ENCODE measurements at regions of chr3 and their contacts with region 1.

Region 1: DNA sequence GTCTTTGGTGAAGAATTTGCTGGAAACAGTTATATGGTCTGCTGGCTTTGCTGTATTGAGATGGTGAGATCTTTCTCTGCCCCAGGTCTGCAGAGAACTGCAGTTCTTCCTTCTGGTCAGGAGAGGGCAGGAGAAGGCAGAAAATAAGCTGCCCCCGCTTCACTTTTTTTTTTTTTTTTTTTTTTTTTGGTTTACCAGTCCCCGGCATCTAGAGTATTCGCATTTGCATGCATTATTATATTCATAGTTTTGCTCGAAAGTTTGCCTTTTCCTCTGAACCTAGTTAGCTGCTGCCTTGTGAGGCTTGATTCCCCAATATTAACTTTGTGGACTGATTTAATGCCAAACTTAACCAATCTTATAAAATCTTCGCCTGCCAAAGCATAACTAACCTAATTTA is 10.6 kb upstream of the PARL start:
- DNase-seq: peak in 1 of 2 experiments; percentile 43
- H3K4me3 ChIP-seq: no peak overlapping the region
- H3K4me3 Mint-ChIP-seq: no peak overlapping the region
- H3K27ac Mint-ChIP-seq: no peak overlapping the region
- H3K4me1 ChIP-seq: peaks cover 7% of the 10 kb centered on the region; the same call in 1 of the 2 replicates
- H3K4me1 Mint-ChIP-seq: no peaks in the 10 kb centered on the region
- H3K27me3 ChIP-seq: no peaks in the 10 kb centered on the region
- H3K27me3 Mint-ChIP-seq: no peaks in the 10 kb centered on the region
- CTCF ChIP-seq: peak; percentile 82 to 83

Region 2: GRCh38 chr3:183966251-183966801 is 71.0 kb after region 1 on chr3:
- CTCF ChIA-PET with region 1: no interaction called
- POLR2A ChIA-PET with region 1: no interaction called
- intact Hi-C with region 1: loop called (anchors 1 kb)
- DNase-seq: peak; percentile 68
- H3K4me3 ChIP-seq: no peak overlapping the region
- H3K4me3 Mint-ChIP-seq: peak overlapping the region; percentile 42
- H3K27ac Mint-ChIP-seq: peak overlapping the region; percentile 76
- H3K4me1 ChIP-seq: peaks cover 46% of the 10 kb centered on the region
- H3K4me1 Mint-ChIP-seq: peaks cover 31% of the 10 kb centered on the region
- H3K27me3 ChIP-seq: no peaks in the 10 kb centered on the region
- H3K27me3 Mint-ChIP-seq: no peaks in the 10 kb centered on the region
- CTCF ChIP-seq: no peak

Region 3: GRCh38 chr3:183988216-183988790 is 93.0 kb after region 1 on chr3:
- CTCF ChIA-PET with region 1: interaction called, 11 read pairs
- POLR2A ChIA-PET with region 1: no interaction called
- intact Hi-C with region 1: no loop called
- DNase-seq: peak; percentile 77
- H3K4me3 ChIP-seq: no peak overlapping the region
- H3K4me3 Mint-ChIP-seq: peak overlapping the region; percentile 52
- H3K27ac Mint-ChIP-seq: peak overlapping the region; percentile 72
- H3K4me1 ChIP-seq: peaks cover 40% of the 10 kb centered on the region
- H3K4me1 Mint-ChIP-seq: peaks cover 48% of the 10 kb centered on the region
- H3K27me3 ChIP-seq: no peaks in the 10 kb centered on the region
- H3K27me3 Mint-ChIP-seq: no peaks in the 10 kb centered on the region
- CTCF ChIP-seq: peak in 1 of 2 experiments; percentile 38

Region 4: DNA sequence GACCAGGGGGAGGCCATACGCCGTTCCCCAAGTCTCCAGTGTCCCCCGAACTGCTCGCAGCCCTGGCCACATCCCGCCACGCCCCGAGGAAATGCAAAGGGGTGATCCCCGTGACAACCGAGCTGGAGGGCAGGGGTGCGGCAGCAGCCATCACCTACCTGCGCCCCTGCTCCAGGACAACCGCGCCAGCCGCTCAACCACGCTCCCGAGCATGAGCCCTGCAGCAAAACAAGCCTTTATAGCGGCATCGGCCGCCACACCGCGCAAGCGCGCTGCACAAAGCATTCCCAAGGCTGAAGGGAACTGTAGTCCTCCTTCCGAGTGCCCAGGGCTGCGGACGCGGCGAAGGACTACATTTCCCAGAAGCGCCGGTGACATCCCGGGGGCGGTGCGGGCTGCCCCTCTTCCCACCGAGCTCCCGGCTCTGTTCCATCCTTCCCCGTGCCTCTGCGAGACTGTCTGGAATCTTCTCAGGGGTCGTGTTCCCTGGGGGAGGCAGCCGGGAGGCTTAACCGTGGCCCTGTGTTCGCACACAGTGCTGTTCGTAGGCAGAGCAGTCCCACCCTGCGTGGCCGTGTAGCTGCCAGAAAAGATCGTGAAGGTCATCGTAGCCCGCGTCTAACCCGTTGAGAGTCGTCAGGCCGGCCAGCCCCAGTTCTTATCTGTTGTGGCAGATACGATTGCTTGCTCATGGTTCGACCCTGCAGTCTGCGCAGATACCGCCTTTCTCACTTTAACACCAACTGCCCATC is 122.6 kb after region 1 on chr3 and contains the start of gene ABCC5:
- CTCF ChIA-PET with region 1: interaction called, 11 read pairs
- POLR2A ChIA-PET with region 1: no interaction called
- intact Hi-C with region 1: loop called (anchors 1 kb)
- DNase-seq: peak; percentile 91 to 93
- H3K4me3 ChIP-seq: peak within 1 kb of the TSS; percentile 98
- H3K4me3 Mint-ChIP-seq: peak within 1 kb of the TSS; percentile 91
- H3K27ac Mint-ChIP-seq: peak within 1 kb of the TSS; percentile 83
- H3K4me1 ChIP-seq: no peaks in the 10 kb centered on the region
- H3K4me1 Mint-ChIP-seq: no peaks in the 10 kb centered on the region
- H3K27me3 ChIP-seq: no peaks in the 10 kb centered on the region
- H3K27me3 Mint-ChIP-seq: peaks cover 3% of the 10 kb centered on the region
- CTCF ChIP-seq: peak in 1 of 2 experiments; percentile 45
- total RNA-seq, gene ABCC5: 21.3 and 22.4 TPM in 2 replicates

Region 5: DNA sequence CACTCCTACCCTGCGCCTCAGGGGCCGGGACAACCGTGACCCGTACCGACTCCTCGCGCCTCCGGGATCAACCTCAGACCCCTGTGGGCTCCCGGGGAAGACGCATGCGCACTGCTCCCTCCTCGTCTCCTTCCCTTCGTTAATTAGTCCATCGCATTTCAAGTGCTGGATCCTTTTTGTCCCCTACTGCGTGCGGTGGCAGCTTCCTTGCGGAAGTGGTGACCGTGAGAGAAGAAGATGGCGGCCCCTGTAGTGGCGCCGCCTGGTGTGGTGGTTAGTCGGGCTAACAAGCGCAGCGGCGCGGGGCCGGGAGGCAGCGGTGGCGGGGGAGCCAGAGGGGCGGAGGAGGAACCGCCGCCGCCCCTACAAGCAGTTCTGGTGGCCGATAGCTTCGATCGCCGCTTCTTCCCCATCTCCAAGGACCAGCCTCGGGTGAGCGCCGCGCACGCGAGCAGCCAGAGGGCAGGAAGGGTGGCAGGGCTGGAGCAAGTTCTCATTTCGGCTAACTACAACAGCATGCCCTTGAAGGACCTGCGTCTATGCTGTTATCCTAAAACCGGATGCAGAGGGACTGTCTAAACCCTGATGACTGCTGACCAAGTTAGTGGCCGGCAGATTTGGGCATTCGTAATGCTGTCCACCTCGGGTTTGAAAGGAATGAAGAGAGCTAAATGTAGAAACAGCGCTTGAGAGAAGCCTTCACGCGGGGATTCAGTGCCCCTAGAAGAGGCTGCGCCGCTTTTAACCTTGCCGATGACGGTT is 240.0 kb after region 1 on chr3 and contains the start of gene EIF2B5:
- CTCF ChIA-PET with region 1: interaction called, 7 read pairs
- POLR2A ChIA-PET with region 1: no interaction called
- intact Hi-C with region 1: loop called (anchors 5 kb)
- DNase-seq: peak; percentile 89 to 92
- H3K4me3 ChIP-seq: peak within 1 kb of the TSS; percentile 78
- H3K4me3 Mint-ChIP-seq: peak within 1 kb of the TSS; percentile 98
- H3K27ac Mint-ChIP-seq: peak within 1 kb of the TSS; percentile 93
- H3K4me1 ChIP-seq: peaks cover 9% of the 10 kb centered on the region; the same call in 1 of the 2 replicates
- H3K4me1 Mint-ChIP-seq: peaks cover 7% of the 10 kb centered on the region
- H3K27me3 ChIP-seq: no peaks in the 10 kb centered on the region
- H3K27me3 Mint-ChIP-seq: no peaks in the 10 kb centered on the region
- CTCF ChIP-seq: peak in 1 of 2 experiments; percentile 59
- total RNA-seq, gene EIF2B5: 43.8 and 52.9 TPM in 2 replicates

Region 6: DNA sequence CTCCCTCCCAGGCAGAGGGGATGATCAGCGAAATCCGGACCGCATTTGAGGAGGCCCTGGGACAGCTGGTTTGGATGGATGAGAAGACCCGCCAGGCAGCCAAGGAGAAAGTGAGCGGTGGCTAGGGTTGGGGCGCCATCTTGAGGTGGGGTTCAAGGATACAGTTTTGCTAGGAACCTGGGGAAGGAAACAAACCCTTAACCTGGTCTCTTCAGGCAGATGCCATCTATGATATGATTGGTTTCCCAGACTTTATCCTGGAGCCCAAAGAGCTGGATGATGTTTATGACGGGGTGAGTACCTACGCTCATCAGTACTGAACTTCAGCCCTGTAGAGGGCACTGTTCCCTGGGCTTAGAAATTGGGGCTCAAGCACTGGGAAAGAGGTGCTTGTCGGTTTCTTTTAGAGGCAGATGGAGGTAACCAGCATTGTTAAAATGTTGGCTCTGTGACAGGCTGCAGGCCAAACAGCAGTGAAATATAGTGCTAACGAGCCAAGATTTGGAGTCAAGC is 394.2 kb after region 1 on chr3:
- CTCF ChIA-PET with region 1: no interaction called
- POLR2A ChIA-PET with region 1: no interaction called
- intact Hi-C with region 1: loop called (anchors 2 kb)
- DNase-seq: peak; percentile 64 to 75
- H3K4me3 ChIP-seq: no peak overlapping the region
- H3K4me3 Mint-ChIP-seq: no peak overlapping the region
- H3K27ac Mint-ChIP-seq: no peak overlapping the region
- H3K4me1 ChIP-seq: no peaks in the 10 kb centered on the region
- H3K4me1 Mint-ChIP-seq: no peaks in the 10 kb centered on the region
- H3K27me3 ChIP-seq: no peaks in the 10 kb centered on the region
- H3K27me3 Mint-ChIP-seq: peaks cover 4% of the 10 kb centered on the region
- CTCF ChIP-seq: peak; percentile 40 to 63

Region 7: GRCh38 chr3:184298759-184299496 is 403.6 kb after region 1 on chr3 and contains the start of gene PSMD2:
- CTCF ChIA-PET with region 1: interaction called, 12 read pairs
- POLR2A ChIA-PET with region 1: no interaction called
- intact Hi-C with region 1: no loop called
- DNase-seq: peak; percentile 97
- H3K4me3 ChIP-seq: peak within 1 kb of the TSS; percentile 77
- H3K4me3 Mint-ChIP-seq: peak within 1 kb of the TSS; percentile 81
- H3K27ac Mint-ChIP-seq: peak within 1 kb of the TSS; percentile 80
- H3K4me1 ChIP-seq: peaks cover 6% of the 10 kb centered on the region; the same call in 1 of the 2 replicates
- H3K4me1 Mint-ChIP-seq: no peaks in the 10 kb centered on the region
- H3K27me3 ChIP-seq: no peaks in the 10 kb centered on the region
- H3K27me3 Mint-ChIP-seq: no peaks in the 10 kb centered on the region
- CTCF ChIP-seq: no peak
- total RNA-seq, gene PSMD2: 285 and 294 TPM in 2 replicates